ENCODE measurements at regions of chr13 and their contacts with region 1.

Region 1: DNA sequence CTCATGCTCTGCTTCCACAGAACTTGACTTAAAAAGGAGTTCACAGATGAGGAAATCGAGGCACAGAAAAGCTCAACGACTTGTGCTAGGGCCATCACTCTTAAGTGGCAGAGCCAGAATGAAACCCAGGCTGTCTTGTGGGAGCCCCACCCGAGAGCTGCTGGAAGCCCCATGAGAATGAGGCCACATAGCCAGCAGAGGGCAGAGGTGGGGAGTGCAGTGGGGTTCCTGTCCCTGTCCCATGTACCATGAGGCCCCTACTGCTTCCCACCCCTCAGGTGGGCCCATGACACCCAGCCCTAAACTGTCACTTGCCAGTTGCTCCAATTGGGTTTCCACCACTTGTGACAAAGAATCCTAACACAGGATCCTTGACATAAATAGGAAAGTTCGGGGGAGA is 175.9 kb downstream of the IRS2 start:
- DNase-seq: peak; percentile 51
- ATAC-seq: peak; percentile 67
- H3K4me3 Mint-ChIP-seq: no peak overlapping the region
- H3K27ac Mint-ChIP-seq: no peak overlapping the region
- H3K4me1 Mint-ChIP-seq: no peaks in the 10 kb centered on the region
- H3K27me3 Mint-ChIP-seq: no peaks in the 10 kb centered on the region
- CTCF ChIP-seq: no peak

Region 2: DNA sequence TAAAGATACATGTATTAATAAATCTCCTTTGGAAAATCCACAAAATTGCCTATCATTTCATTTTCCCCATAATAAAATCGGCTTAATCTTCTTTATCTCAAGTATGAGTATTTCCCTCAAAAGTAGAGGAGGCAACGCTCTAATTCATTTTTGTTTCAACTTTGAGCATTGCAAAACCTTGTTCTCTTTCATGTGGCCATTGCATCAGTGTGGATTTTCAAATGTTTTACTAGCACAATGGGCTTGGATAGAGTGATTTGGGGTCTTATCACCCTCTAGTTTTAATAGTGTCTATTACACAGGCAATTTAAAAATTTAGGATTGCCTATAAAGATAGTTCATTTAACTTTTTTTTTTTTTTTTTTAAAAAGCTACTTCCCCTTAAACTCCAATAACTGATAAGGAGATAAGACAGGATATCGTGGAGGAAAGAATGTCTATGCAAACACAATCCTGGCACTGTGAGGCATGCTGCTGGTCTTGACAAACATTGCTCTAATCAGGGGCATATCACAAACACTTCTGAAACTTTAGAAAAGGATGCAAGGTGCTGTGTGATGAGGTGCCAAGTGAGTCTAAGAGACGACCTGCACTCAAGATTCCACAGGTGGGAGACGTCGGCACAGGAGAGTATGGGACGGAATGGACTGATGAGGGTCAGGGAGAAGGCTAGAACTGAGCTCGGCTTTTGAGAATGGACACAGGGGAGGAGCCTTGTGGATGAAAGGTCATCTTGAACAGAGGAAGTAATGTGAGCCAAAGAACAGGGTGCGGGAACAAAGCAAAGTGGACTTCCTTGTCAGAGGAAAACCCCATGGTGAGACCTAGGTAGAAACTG is 23.8 kb before region 1 on chr13:
- CTCF ChIA-PET with region 1: interaction called, 4 read pairs
- POLR2A ChIA-PET with region 1: no interaction called
- intact Hi-C with region 1: loop called (anchors 1 kb)
- DNase-seq: no peak
- ATAC-seq: no peak
- H3K4me3 Mint-ChIP-seq: no peak overlapping the region
- H3K27ac Mint-ChIP-seq: no peak overlapping the region
- H3K4me1 Mint-ChIP-seq: no peaks in the 10 kb centered on the region
- H3K27me3 Mint-ChIP-seq: no peaks in the 10 kb centered on the region
- CTCF ChIP-seq: no peak

Region 3: GRCh38 chr13:109636736-109637135 is 26.2 kb after region 1 on chr13:
- CTCF ChIA-PET with region 1: no interaction called
- POLR2A ChIA-PET with region 1: no interaction called
- intact Hi-C with region 1: no loop called
- DNase-seq: no peak
- ATAC-seq: no peak
- H3K4me3 Mint-ChIP-seq: no peak overlapping the region
- H3K27ac Mint-ChIP-seq: no peak overlapping the region
- H3K4me1 Mint-ChIP-seq: no peaks in the 10 kb centered on the region
- H3K27me3 Mint-ChIP-seq: peaks cover 5% of the 10 kb centered on the region
- CTCF ChIP-seq: no peak

Region 4: GRCh38 chr13:109790951-109791605 is 180.6 kb after region 1 on chr13:
- CTCF ChIA-PET with region 1: interaction called, 3 read pairs
- POLR2A ChIA-PET with region 1: no interaction called
- intact Hi-C with region 1: loop called (anchors 5 kb)
- DNase-seq: peak; percentile 33
- ATAC-seq: no peak
- H3K4me3 Mint-ChIP-seq: no peak overlapping the region
- H3K27ac Mint-ChIP-seq: no peak overlapping the region
- H3K4me1 Mint-ChIP-seq: peaks cover 14% of the 10 kb centered on the region
- H3K27me3 Mint-ChIP-seq: peaks cover 19% of the 10 kb centered on the region
- CTCF ChIP-seq: peak; percentile 27